Dorsolateral prefrontal cortex (tissue), 120 donors: ENCODE measurements at regions of chr10 and their contacts with region 1.

Region 1: GRCh38 chr10:50417886-50418830 is 166.8 kb upstream of the ASAH2 start:
- DNase-seq: peak in 7 of 10 donors; percentile 7 to 75 (median 48)
- H3K4me3 ChIP-seq: peak overlapping the region; percentile 45 to 89 (median 76)
- H3K27ac ChIP-seq: peak overlapping the region; percentile 3 to 94 (median 87)
- H3K27me3 ChIP-seq: no peaks in the 10 kb centered on the region
- CTCF ChIP-seq: peak in 28 of 56 donors; percentile 3 to 50 (median 23)

Region 2: GRCh38 chr10:50275650-50276235 is 142.4 kb before region 1 on chr10:
- intact Hi-C with region 1: no loop called
- DNase-seq: peak in 6 of 10 donors; percentile 24 to 60 (median 46)
- H3K4me3 ChIP-seq: no peak overlapping the region
- H3K27ac ChIP-seq: no peak overlapping the region
- H3K27me3 ChIP-seq: peaks cover 0 to 4% (median 0%) of the 10 kb centered on the region in 45 donors
- CTCF ChIP-seq: peak in 54 of 56 donors; percentile 21 to 73 (median 58)

Region 3: DNA sequence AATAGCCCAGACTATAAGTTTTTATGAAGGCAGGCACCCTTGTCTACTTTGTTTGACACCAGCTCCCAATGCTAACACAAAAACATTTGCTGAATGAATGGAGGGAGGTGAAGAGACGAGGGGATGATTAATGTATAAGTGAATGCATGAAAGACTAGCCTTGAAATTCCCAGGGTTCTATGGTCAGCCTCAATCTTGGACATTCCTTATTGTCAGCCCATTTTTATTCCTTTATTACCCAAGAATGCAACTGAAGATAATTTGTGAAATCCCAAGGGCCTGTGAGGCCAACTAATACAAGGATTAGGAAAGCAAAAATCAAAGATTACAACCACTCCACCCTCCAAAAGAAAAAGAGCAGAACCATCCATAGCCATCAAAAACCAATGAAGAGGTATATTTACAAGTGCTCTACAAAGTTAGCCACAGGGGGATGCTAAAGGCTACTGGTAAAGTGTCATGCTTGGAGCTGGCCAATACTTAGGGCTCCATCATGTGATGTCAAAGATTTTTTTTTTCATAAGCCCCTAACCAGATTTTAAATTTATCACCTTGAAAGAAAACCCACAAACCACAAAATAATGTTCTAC is 126.8 kb before region 1 on chr10:
- intact Hi-C with region 1: loop called in 1 of 2 experiments (anchors 10 kb)
- DNase-seq: no peak
- H3K4me3 ChIP-seq: no peak overlapping the region
- H3K27ac ChIP-seq: no peak overlapping the region
- H3K27me3 ChIP-seq: no peaks in the 10 kb centered on the region
- CTCF ChIP-seq: peak in 53 of 56 donors; percentile 17 to 74 (median 48)

Region 4: GRCh38 chr10:50381642-50382041 is 36.5 kb before region 1 on chr10:
- intact Hi-C with region 1: loop called in 1 of 2 experiments (anchors 5 kb)
- DNase-seq: no peak
- H3K4me3 ChIP-seq: peak overlapping the region in 5 of 59 donors; percentile 5 to 30 (median 14)
- H3K27ac ChIP-seq: peak overlapping the region in 51 of 59 donors; percentile 2 to 95 (median 68)
- H3K27me3 ChIP-seq: no peaks in the 10 kb centered on the region
- CTCF ChIP-seq: no peak

Region 5: GRCh38 chr10:50508315-50509051 is 90.3 kb after region 1 on chr10:
- intact Hi-C with region 1: loop called (anchors 5 kb)
- DNase-seq: no peak
- H3K4me3 ChIP-seq: no peak overlapping the region
- H3K27ac ChIP-seq: peak overlapping the region; percentile 79 to 100 (median 97)
- H3K27me3 ChIP-seq: no peaks in the 10 kb centered on the region
- CTCF ChIP-seq: no peak

Region 6: DNA sequence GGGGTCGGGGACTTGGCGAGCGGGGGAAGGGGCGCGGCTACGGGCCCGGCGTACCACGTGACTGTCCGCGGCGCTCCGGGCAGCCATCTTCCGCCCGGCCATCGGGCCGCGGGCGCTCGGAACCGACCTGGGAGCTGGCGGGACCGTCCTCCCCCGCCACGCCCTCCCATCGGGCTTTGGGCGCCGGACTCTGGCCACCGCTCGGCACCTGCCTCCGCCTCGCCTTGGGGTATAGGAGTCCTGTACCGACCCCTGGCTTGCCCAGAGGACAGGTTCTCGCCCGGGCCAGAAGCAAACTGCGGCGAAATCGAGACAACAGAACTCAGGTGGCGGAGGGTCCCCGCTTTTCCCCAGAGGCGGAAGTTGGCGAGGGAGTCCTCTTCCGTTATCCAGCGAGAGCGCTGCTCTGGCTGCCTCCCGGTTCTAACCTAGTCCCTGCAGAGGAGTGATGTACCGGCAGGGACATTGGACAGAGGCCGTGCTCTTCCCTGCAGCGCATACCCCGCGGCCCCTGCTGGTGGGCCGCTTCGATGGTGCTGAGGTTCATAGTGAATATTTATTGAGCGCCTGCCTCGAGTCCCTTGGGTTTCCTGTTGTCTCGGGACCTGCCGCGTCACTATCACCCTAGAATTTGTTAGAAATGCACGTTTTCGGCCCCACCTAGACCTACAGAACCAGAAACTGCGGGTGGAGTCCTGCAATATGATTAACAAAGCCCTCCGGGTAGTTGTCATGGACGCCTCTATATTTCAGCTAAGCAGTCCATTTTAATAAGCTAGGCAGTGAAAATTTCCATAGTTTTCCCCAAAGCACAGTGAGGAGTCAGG is 206.9 kb after region 1 on chr10:
- intact Hi-C with region 1: loop called (anchors 1 to 2 kb)
- DNase-seq: peak; percentile 52 to 88 (median 72)
- H3K4me3 ChIP-seq: peak overlapping the region; percentile 64 to 99 (median 92)
- H3K27ac ChIP-seq: peak overlapping the region; percentile 79 to 100 (median 100)
- H3K27me3 ChIP-seq: no peaks in the 10 kb centered on the region
- CTCF ChIP-seq: peak; percentile 34 to 81 (median 65)